ENCODE measurements at regions of chr3 and their contacts with region 1.

Region 1: DNA sequence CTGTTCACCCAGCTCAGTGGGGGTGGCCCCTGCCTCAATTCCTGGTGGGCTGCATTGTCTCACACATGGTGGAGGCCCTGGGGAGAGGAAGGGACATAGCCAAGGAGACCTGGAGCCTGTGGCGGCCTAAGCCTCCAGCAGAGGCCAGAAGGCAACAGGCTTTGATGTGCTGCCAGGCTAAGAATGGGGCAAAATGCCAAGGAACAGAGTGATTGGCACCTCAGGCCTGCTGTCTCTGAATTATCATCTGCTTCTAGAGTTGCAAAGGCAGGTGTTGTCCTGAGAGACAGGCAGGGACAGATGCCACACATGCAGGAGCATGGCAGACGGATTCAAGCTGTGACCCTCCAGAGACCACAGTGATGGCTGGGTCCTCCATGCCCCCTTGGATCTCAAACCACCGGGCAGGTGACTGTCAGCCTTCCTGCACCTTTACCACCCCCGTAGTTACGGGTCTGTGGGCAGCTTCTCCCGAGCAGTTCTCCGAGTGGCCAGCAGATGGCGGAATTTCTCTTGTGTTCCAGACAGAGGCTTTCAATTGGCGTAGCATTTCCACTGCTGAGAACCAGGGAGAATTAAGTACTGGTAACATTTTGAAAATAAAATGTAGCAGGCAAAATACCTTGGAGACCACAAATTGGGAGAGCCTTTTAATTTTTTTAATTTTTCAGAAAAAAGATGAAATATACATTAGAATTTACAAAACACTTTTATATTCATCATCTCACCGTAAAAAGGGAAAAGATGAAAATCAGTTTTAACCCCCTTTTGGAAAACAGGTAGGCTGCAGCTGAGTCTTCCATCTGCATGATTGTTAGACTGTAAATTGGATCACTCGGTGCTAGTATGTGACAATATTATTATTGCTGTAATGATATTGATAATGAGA is 525.5 kb upstream of the CFAP20DC start:
- DNase-seq: peak; percentile 73
- H3K4me3 ChIP-seq: peak overlapping the region in 1 of 2 experiments; percentile 45; a peak in 1 of 4 replicates
- H3K27ac ChIP-seq: no peak overlapping the region
- H3K4me1 ChIP-seq: peaks cover 5 to 6% of the 10 kb centered on the region in 2 experiments
- H3K27me3 ChIP-seq: no peaks in the 10 kb centered on the region
- CTCF ChIP-seq: peak; percentile 96
- EP300 ChIP-seq: no peak
- RAD21 ChIP-seq: peak; percentile 97

Region 2: DNA sequence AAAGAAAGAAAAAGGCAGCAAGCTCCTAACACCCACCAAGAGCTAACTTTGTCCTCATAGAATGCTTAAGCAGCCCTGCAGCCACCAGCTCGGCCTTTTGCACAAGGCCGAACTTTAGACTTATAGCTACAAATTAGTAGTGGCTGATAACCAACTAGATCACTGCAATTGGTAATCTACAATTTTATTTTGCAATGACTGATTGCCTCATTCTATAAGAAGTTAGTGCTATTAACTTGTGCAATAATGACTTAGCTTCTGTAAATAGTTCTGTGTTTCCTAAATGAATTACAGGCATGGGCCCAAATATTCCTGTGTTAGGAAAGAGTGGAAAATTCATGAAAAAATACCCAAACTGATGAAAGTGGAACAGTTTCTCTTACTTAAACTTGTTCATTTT is 240.8 kb before region 1 on chr3:
- CTCF ChIA-PET with region 1: no interaction called
- POLR2A ChIA-PET with region 1: no interaction called
- DNase-seq: no peak
- H3K4me3 ChIP-seq: no peak overlapping the region
- H3K27ac ChIP-seq: no peak overlapping the region
- H3K4me1 ChIP-seq: no peaks in the 10 kb centered on the region
- H3K27me3 ChIP-seq: no peaks in the 10 kb centered on the region
- CTCF ChIP-seq: no peak
- EP300 ChIP-seq: no peak
- RAD21 ChIP-seq: no peak

Region 3: GRCh38 chr3:59502806-59503205 is 72.6 kb before region 1 on chr3:
- CTCF ChIA-PET with region 1: no interaction called
- POLR2A ChIA-PET with region 1: no interaction called
- DNase-seq: no peak
- H3K4me3 ChIP-seq: no peak overlapping the region
- H3K27ac ChIP-seq: no peak overlapping the region
- H3K4me1 ChIP-seq: no peaks in the 10 kb centered on the region
- H3K27me3 ChIP-seq: no peaks in the 10 kb centered on the region
- CTCF ChIP-seq: no peak
- EP300 ChIP-seq: no peak
- RAD21 ChIP-seq: no peak

Region 4: GRCh38 chr3:59595830-59596229 is 20.5 kb after region 1 on chr3:
- CTCF ChIA-PET with region 1: interaction called, 10 read pairs
- POLR2A ChIA-PET with region 1: no interaction called
- DNase-seq: no peak
- H3K4me3 ChIP-seq: no peak overlapping the region
- H3K27ac ChIP-seq: no peak overlapping the region
- H3K4me1 ChIP-seq: no peaks in the 10 kb centered on the region
- H3K27me3 ChIP-seq: 0 out of 2 replicates have a peak, but pooled peaks cover 4% of the 10 kb centered on the region
- CTCF ChIP-seq: no peak
- EP300 ChIP-seq: no peak
- RAD21 ChIP-seq: no peak

Region 5: DNA sequence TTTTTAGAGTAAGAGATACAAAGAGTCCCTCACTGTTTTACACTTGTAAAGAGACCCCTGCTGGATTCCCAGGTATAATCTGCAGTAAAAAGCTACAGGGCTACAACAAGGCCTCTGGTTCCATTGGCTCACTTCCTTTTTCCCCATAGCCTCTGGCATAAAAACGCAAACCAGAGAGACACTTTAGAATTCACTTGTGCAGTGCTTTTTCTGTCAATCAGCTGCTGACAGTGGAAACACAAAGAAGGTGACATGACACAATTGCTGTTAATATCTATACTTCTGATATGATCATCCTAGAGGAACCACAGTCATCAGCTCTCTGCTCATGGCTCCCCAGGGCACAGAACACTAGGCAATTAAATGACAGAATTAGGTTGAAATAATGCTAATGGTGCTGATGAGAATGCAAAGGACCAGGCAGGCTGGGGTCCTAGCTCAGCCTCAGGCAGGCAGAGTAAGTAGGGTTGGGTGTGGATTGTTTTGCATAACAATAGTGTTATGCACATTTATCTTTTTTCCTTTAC is 142.4 kb after region 1 on chr3:
- CTCF ChIA-PET with region 1: interaction called, 19 read pairs
- POLR2A ChIA-PET with region 1: no interaction called
- DNase-seq: peak; percentile 23
- H3K4me3 ChIP-seq: no peak overlapping the region
- H3K27ac ChIP-seq: peak overlapping the region in 1 of 2 experiments; percentile 69; a peak in 2 of 4 replicates
- H3K4me1 ChIP-seq: peaks cover 0 to 12% of the 10 kb centered on the region in 2 experiments; a peak in 2 of 4 replicates
- H3K27me3 ChIP-seq: no peaks in the 10 kb centered on the region
- CTCF ChIP-seq: no peak
- EP300 ChIP-seq: peak in 1 of 2 experiments; percentile 74; a peak in 2 of 4 replicates
- RAD21 ChIP-seq: peak; percentile 31; the same call in 1 of the 2 replicates

Region 6: DNA sequence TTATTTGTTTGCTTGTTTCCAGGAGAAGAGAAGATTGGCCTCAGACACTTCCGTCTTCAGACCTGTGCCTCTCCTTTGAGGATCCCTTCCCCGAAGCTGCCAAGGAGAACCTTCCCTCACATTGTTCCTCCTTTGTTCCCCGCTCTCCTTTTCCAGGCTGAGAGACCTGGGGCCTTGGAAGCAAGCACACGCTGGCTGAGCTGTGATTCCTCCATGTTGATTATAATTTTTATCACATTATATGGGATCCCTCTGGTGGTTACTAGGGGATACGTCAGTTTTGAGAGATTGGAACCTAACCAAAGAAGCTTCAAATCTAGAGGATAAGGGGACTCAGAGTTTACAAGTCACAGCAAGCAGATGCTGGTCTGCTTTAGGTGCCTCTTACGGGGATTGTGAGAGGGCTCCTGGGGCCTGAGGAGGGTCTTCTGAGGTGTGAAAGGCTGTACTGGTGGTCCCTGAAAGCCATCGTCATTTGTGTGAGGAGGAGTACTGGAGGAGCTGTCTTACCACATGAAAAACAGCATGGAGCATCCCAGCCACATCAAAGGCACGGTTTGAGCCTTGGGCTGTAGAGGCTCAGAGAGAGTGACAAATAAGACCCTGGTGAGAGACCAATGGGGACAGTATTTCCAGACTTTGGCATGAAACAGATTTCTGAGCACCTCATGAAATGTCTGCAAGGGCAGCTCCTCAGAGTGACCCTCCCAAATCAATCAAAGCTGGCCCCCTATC is 234.5 kb after region 1 on chr3:
- CTCF ChIA-PET with region 1: interaction called, 91 read pairs
- POLR2A ChIA-PET with region 1: no interaction called
- DNase-seq: peak; percentile 58
- H3K4me3 ChIP-seq: no peak overlapping the region
- H3K27ac ChIP-seq: no peak overlapping the region
- H3K4me1 ChIP-seq: peaks cover 7 to 27% of the 10 kb centered on the region in 2 experiments; a peak in 3 of 4 replicates
- H3K27me3 ChIP-seq: no peaks in the 10 kb centered on the region
- CTCF ChIP-seq: peak; percentile 51
- EP300 ChIP-seq: no peak
- RAD21 ChIP-seq: peak; percentile 80

Region 7: DNA sequence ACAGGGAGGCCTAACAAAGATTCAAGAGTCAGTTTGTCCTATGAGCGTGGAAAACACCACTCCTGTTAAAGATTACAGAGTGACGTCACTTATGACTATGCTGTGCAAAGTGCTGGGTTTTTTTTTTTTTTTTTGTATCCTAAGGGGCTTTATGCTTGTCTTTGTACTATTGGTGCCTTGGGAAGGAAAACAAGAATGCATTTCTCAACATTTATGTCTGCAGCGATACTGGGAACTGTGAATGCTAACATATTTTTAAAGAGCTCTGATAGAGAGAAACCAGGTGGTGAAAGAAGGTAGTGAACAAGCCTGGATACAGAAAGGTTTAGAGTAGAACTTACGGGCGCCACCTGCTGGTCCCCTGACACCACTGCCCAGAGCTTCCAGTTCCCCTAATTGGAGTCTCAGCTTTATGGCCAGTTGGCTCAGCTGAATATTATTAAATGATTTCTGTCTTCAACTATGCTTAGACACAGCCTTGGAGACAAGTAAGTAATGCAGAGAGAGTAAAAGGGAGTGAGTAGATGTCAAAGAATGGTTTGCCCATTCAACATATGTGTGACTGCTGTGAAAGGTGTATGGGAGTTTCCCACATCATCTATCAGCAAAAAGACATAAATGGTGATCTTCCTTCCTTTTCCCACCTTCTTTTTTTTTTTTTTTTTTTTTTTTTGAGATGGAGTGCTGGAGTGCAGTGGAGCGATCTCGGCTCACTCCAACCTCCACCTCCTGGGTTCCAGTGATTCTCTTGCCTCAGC is 282.4 kb after region 1 on chr3:
- CTCF ChIA-PET with region 1: interaction called, 114 read pairs
- POLR2A ChIA-PET with region 1: no interaction called
- DNase-seq: peak; percentile 62
- H3K4me3 ChIP-seq: peak overlapping the region in 1 of 2 experiments; percentile 23; a peak in 1 of 4 replicates
- H3K27ac ChIP-seq: no peak overlapping the region
- H3K4me1 ChIP-seq: no peaks in the 10 kb centered on the region; a peak in 2 of 4 replicates
- H3K27me3 ChIP-seq: no peaks in the 10 kb centered on the region; the same call in 1 of the 2 replicates
- CTCF ChIP-seq: peak; percentile 97
- EP300 ChIP-seq: no peak
- RAD21 ChIP-seq: peak; percentile 89